B cell (primary cell): ENCODE measurements at regions of chr5 and their contacts with region 1.

Region 1: GRCh38 chr5:150000256-150000989 is at the starts of genes HMGXB3 and TIGD6:
- DNase-seq: peak; percentile 94
- ATAC-seq: peak; percentile 85
- H3K4me3 ChIP-seq: peak within 1 kb of the TSS; percentile 48 to 90 (median 83)
- H3K4me3 Mint-ChIP-seq: peak within 1 kb of the TSS; percentile 89
- H3K27ac ChIP-seq: peak within 1 kb of the TSS; percentile 83 to 87
- H3K27ac Mint-ChIP-seq: peak within 1 kb of the TSS; percentile 96
- H3K4me1 ChIP-seq: peaks cover 21 to 23% of the 10 kb centered on the region in 2 donors
- H3K4me1 Mint-ChIP-seq: peaks cover 37% of the 10 kb centered on the region
- H3K27me3 ChIP-seq: no peaks in the 10 kb centered on the region
- H3K27me3 Mint-ChIP-seq: no peaks in the 10 kb centered on the region
- CTCF ChIP-seq: no peak
- total RNA-seq, gene HMGXB3: 35.7 and 40.7 TPM in 2 replicates
- total RNA-seq, gene TIGD6: 5.4 and 5.9 TPM in 2 replicates

Region 2: DNA sequence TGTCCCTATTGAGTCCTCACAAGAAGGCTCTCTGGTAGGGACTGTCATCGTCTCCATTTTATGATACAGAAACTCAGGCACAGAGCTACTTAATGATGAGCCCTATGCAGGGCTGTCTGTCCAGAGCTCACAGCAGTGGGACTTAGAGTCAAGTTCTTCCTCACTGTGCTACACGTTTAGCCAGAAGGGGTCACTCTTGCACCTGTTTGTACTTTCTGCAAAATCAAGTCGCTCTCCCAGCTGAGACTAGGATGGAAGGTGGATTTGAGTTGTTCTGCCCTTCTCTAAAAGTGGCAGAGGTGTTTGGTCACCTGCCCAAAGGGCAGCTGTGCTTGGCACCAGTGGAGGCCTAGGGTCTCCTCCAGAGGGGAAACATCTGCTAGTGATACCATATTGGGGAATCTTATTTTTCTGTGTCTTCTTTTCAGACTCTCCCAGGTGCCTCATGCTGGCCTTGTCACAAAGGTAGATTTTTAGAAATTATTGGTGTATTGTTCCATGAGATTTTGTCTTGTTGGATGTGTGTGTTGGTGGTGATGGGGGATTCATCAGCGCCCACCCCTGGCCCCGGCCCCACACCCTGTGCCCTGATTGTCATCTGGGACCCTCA is 166.1 kb before region 1 on chr5:
- CTCF ChIA-PET with region 1: interaction called, 14 read pairs
- POLR2A ChIA-PET with region 1: no interaction called
- intact Hi-C with region 1: no loop called
- DNase-seq: peak; percentile 65
- ATAC-seq: no peak
- H3K4me3 ChIP-seq: no peak overlapping the region
- H3K4me3 Mint-ChIP-seq: no peak overlapping the region
- H3K27ac ChIP-seq: no peak overlapping the region
- H3K27ac Mint-ChIP-seq: no peak overlapping the region
- H3K4me1 ChIP-seq: no peaks in the 10 kb centered on the region
- H3K4me1 Mint-ChIP-seq: peaks cover 5% of the 10 kb centered on the region
- H3K27me3 ChIP-seq: no peaks in the 10 kb centered on the region
- H3K27me3 Mint-ChIP-seq: no peaks in the 10 kb centered on the region
- CTCF ChIP-seq: peak; percentile 63

Region 3: GRCh38 chr5:149913436-149914419 is 86.7 kb before region 1 on chr5:
- CTCF ChIA-PET with region 1: no interaction called
- POLR2A ChIA-PET with region 1: no interaction called
- intact Hi-C with region 1: no loop called
- DNase-seq: no peak
- ATAC-seq: no peak
- H3K4me3 ChIP-seq: no peak overlapping the region
- H3K4me3 Mint-ChIP-seq: no peak overlapping the region
- H3K27ac ChIP-seq: no peak overlapping the region
- H3K27ac Mint-ChIP-seq: no peak overlapping the region
- H3K4me1 ChIP-seq: no peaks in the 10 kb centered on the region
- H3K4me1 Mint-ChIP-seq: peaks cover 4% of the 10 kb centered on the region
- H3K27me3 ChIP-seq: peaks cover 0 to 4% (median 1%) of the 10 kb centered on the region in 4 experiments
- H3K27me3 Mint-ChIP-seq: peaks cover 31% of the 10 kb centered on the region
- CTCF ChIP-seq: no peak

Region 4: GRCh38 chr5:149960272-149961185 is 39.9 kb before region 1 on chr5 and contains the start of gene SLC26A2:
- CTCF ChIA-PET with region 1: interaction called, 9 read pairs
- POLR2A ChIA-PET with region 1: interaction called, 9 read pairs
- intact Hi-C with region 1: loop called (anchors 1 kb)
- DNase-seq: peak; percentile 95
- ATAC-seq: peak; percentile 97
- H3K4me3 ChIP-seq: peak within 1 kb of the TSS; percentile 54 to 85 (median 79)
- H3K4me3 Mint-ChIP-seq: peak within 1 kb of the TSS; percentile 93
- H3K27ac ChIP-seq: peak within 1 kb of the TSS; percentile 74 to 81
- H3K27ac Mint-ChIP-seq: peak within 1 kb of the TSS; percentile 96
- H3K4me1 ChIP-seq: peaks cover 20% of the 10 kb centered on the region in 2 donors
- H3K4me1 Mint-ChIP-seq: peaks cover 29% of the 10 kb centered on the region
- H3K27me3 ChIP-seq: no peaks in the 10 kb centered on the region
- H3K27me3 Mint-ChIP-seq: no peaks in the 10 kb centered on the region
- CTCF ChIP-seq: no peak
- total RNA-seq, gene SLC26A2: 13.2 and 13.5 TPM in 2 replicates